Esophagus muscularis mucosa (tissue), 4 donors: ENCODE measurements at regions of chr5 and their contacts with region 1.

Region 1: GRCh38 chr5:150846654-150847333 is 473 bp downstream of the IRGM start:
- DNase-seq: no peak
- H3K4me3 ChIP-seq: no peak overlapping the region
- H3K27ac ChIP-seq: no peak overlapping the region
- H3K4me1 ChIP-seq: peaks cover 0 to 6% (median 4%) of the 10 kb centered on the region in 4 donors
- H3K27me3 ChIP-seq: no peaks in the 10 kb centered on the region
- CTCF ChIP-seq: peak; percentile 63 to 78 (median 65)
- EP300 ChIP-seq: no peak
- POLR2A ChIP-seq: no peak

Region 2: GRCh38 chr5:150560401-150561193 is 286.2 kb before region 1 on chr5:
- intact Hi-C with region 1: loop called (anchors 2 kb)
- DNase-seq: peak; percentile 98
- H3K4me3 ChIP-seq: no peak overlapping the region
- H3K27ac ChIP-seq: no peak overlapping the region
- H3K4me1 ChIP-seq: peaks cover 0 to 20% (median 4%) of the 10 kb centered on the region in 4 donors
- H3K27me3 ChIP-seq: no peaks in the 10 kb centered on the region
- CTCF ChIP-seq: peak; percentile 89 to 97 (median 89)
- EP300 ChIP-seq: no peak
- POLR2A ChIP-seq: no peak

Region 3: GRCh38 chr5:150700594-150701293 is 146.1 kb before region 1 on chr5 and contains the start of gene RBM22:
- intact Hi-C with region 1: loop called (anchors 10 kb)
- DNase-seq: peak; percentile 97
- H3K4me3 ChIP-seq: peak within 1 kb of the TSS; percentile 80 to 100 (median 91)
- H3K27ac ChIP-seq: peak within 1 kb of the TSS; percentile 93 to 100 (median 98)
- H3K4me1 ChIP-seq: peaks cover 13 to 26% (median 24%) of the 10 kb centered on the region in 4 donors
- H3K27me3 ChIP-seq: no peaks in the 10 kb centered on the region
- CTCF ChIP-seq: peak; percentile 53 to 66 (median 58)
- EP300 ChIP-seq: no peak
- POLR2A ChIP-seq: peak; percentile 69
- total RNA-seq, gene RBM22: 20.8 to 31.3 (median 22.7) TPM

Region 4: GRCh38 chr5:150801117-150801927 is 45.5 kb before region 1 on chr5:
- intact Hi-C with region 1: loop called (anchors 2 kb)
- DNase-seq: no peak
- H3K4me3 ChIP-seq: peak overlapping the region; percentile 38 to 54 (median 42)
- H3K27ac ChIP-seq: peak overlapping the region; percentile 35 to 61 (median 54)
- H3K4me1 ChIP-seq: peaks cover 0 to 13% (median 11%) of the 10 kb centered on the region in 4 donors
- H3K27me3 ChIP-seq: no peaks in the 10 kb centered on the region
- CTCF ChIP-seq: peak; percentile 17 to 52 (median 44)
- EP300 ChIP-seq: no peak
- POLR2A ChIP-seq: no peak

Region 5: GRCh38 chr5:151020304-151021110 is 173.7 kb after region 1 on chr5 and contains the start of gene GPX3:
- intact Hi-C with region 1: no loop called
- DNase-seq: peak; percentile 98
- H3K4me3 ChIP-seq: peak within 1 kb of the TSS; percentile 72 to 87 (median 80)
- H3K27ac ChIP-seq: peak within 1 kb of the TSS; percentile 85 to 86 (median 85)
- H3K4me1 ChIP-seq: peaks cover 55 to 78% (median 76%) of the 10 kb centered on the region in 4 donors
- H3K27me3 ChIP-seq: no peaks in the 10 kb centered on the region
- CTCF ChIP-seq: no peak
- EP300 ChIP-seq: no peak
- POLR2A ChIP-seq: peak; percentile 95
- total RNA-seq, gene GPX3: 1,165 to 3,724 (median 1,939) TPM